H1 (cell line): ENCODE measurements at regions of chr19 and their contacts with region 1.

Region 1: GRCh38 chr19:44608391-44608821 is 5.0 kb upstream of the IGSF23 start:
- DNase-seq: no peak
- H3K4me3 ChIP-seq: no peak overlapping the region
- H3K27ac ChIP-seq: no peak overlapping the region
- H3K4me1 ChIP-seq: peaks cover 0 to 8% (median 4%) of the 10 kb centered on the region in 4 experiments; a peak in 5 of 7 replicates
- H3K27me3 ChIP-seq: no peaks in the 10 kb centered on the region
- CTCF ChIP-seq: no peak
- EP300 ChIP-seq: no peak
- POLR2A ChIP-seq: no peak
- RAD21 ChIP-seq: no peak

Region 2: DNA sequence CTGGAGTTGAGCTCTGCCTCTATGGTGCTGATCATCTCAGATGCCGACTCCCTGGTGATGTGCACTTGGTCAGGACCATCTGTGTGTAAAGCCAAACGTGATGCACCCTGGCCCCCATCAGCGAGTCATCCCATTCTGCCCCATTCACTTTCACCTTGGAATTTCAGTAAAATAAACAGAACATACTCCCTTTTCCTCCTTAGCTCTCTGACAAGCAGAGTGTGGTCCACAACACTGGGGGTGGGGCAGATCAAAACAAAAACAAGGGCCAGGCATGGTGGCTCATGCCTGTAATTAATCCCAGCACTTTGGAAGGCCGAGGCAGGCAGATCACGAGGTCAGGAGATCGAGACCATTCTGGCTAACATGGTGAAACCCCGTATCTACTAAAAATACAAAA is 91.3 kb before region 1 on chr19:
- CTCF ChIA-PET with region 1: no interaction called
- POLR2A ChIA-PET with region 1: no interaction called
- DNase-seq: no peak
- H3K4me3 ChIP-seq: no peak overlapping the region
- H3K27ac ChIP-seq: no peak overlapping the region
- H3K4me1 ChIP-seq: no peaks in the 10 kb centered on the region
- H3K27me3 ChIP-seq: no peaks in the 10 kb centered on the region
- CTCF ChIP-seq: no peak
- EP300 ChIP-seq: no peak
- POLR2A ChIP-seq: no peak
- RAD21 ChIP-seq: no peak

Region 3: DNA sequence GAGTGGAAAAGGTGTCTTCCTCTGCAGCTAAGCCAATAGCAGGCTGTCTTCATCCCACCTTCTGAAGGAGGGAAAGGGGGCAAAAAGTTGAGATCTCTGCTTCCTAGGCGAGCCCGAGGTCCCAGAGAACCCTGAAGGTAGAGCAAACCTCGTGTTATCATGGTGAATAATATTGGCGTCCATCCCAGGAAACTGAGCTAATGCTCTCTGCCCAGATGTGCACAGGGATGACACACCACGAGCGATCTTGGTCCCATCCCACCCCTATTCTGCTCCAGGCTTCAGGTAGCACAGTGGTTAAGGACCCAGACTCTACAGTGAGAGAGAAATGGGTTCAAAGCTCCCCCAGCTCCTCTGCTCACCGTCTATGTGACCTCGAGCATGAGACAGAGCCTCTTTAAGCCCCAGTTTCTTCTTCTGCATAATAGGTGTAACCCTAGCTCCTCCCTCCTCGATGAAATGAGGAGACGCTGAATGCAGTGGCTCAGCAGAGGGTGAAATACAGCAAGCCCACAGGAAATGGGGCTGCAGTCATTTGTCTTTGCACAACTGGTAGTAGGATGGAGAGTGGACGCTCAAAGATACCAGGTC is 69.1 kb before region 1 on chr19:
- CTCF ChIA-PET with region 1: no interaction called
- POLR2A ChIA-PET with region 1: no interaction called
- DNase-seq: no peak
- H3K4me3 ChIP-seq: no peak overlapping the region
- H3K27ac ChIP-seq: no peak overlapping the region
- H3K4me1 ChIP-seq: no peaks in the 10 kb centered on the region; a peak in 1 of 7 replicates
- H3K27me3 ChIP-seq: no peaks in the 10 kb centered on the region
- CTCF ChIP-seq: no peak
- EP300 ChIP-seq: no peak
- POLR2A ChIP-seq: no peak
- RAD21 ChIP-seq: no peak

Region 4: DNA sequence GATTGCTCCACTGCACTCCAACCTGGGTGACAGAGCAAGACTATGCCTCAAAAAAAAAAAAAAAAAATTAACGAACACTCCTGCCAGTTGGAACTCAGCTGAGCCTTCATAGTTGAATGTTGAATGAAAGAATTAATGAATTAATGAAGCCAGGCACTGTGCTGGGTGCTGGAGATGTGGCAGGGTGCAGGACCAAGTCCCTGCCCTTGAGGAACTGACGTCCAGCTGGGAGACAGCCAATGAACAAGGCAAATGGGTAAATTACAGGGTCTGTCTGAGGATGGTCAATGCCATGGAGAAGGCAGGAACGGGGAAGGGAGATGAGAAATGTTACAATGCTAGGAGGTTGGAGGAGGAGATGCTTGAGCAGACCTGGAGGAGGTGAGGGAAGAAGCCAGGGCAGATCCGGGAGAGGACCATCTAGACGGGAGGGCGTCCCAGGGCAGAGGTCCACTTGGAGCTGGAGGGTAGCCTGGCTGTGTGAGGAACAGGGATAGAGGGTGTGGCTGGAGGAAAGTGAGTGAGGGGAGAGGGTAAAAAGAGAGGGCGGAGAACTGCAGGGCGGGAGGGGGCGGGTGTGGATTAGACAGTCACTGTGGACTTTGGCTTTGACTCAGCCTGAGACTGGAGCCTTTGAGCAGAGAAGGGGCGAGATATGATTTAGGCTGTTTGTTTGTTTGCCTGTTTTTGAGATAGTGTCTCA is 11.8 kb before region 1 on chr19:
- CTCF ChIA-PET with region 1: interaction called, 31 read pairs
- POLR2A ChIA-PET with region 1: interaction called, 3 read pairs
- DNase-seq: no peak
- H3K4me3 ChIP-seq: no peak overlapping the region
- H3K27ac ChIP-seq: no peak overlapping the region
- H3K4me1 ChIP-seq: peaks cover 0 to 5% (median 3%) of the 10 kb centered on the region in 4 experiments; a peak in 5 of 7 replicates
- H3K27me3 ChIP-seq: no peaks in the 10 kb centered on the region
- CTCF ChIP-seq: no peak
- EP300 ChIP-seq: no peak
- POLR2A ChIP-seq: no peak
- RAD21 ChIP-seq: no peak

Region 5: GRCh38 chr19:44626048-44626624 is 17.7 kb after region 1 on chr19:
- CTCF ChIA-PET with region 1: interaction called, 29 read pairs
- POLR2A ChIA-PET with region 1: no interaction called
- DNase-seq: no peak
- H3K4me3 ChIP-seq: no peak overlapping the region
- H3K27ac ChIP-seq: no peak overlapping the region
- H3K4me1 ChIP-seq: no peaks in the 10 kb centered on the region
- H3K27me3 ChIP-seq: no peaks in the 10 kb centered on the region; a peak in 1 of 7 replicates
- CTCF ChIP-seq: no peak
- EP300 ChIP-seq: no peak
- POLR2A ChIP-seq: no peak
- RAD21 ChIP-seq: no peak

Region 6: DNA sequence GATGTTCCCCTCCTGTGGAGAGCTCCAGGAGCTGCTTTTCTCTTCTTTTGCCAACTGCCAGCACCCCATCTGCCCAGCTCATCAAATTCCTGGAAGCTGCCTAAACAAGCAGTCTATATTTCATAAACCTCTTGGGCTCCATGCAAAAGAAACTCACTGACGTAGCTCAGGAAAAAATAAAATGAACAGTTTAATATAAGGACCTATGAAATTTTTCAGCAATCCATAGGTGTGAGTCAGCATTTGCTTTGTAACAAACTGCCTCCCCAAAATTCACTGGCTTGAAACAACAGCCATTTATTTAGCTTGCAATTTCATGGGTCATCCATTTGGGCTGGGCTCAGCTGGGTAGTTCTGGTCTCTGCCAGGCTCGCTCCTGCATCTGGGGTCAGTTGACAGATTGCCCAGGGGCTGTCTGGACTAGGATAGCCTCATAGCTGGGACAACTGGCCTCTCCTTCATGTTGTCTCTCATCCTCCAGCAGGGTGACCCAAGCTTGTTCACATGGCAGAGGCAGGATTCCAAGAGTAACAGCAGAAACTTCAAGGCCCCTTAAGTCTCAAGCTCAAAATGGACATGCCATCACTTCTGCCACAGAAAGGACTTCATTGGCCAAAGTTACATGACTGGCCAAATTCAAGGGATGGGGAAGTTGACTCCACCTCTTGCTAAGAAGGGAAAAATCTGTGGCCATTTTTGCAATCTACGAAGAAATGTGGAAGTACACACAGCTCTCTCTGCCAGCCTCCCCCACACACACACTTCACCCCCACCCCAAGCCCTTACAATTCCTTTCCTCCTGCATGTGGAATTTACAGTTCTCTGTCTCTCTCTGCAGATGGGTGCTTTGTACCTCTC is 27.4 kb after region 1 on chr19:
- CTCF ChIA-PET with region 1: interaction called, 13 read pairs
- POLR2A ChIA-PET with region 1: interaction called, 3 read pairs
- DNase-seq: no peak
- H3K4me3 ChIP-seq: no peak overlapping the region
- H3K27ac ChIP-seq: no peak overlapping the region
- H3K4me1 ChIP-seq: peaks cover 0 to 2% (median 0%) of the 10 kb centered on the region in 4 experiments; a peak in 1 of 7 replicates
- H3K27me3 ChIP-seq: no peaks in the 10 kb centered on the region
- CTCF ChIP-seq: no peak
- EP300 ChIP-seq: no peak
- POLR2A ChIP-seq: no peak
- RAD21 ChIP-seq: no peak

Region 7: DNA sequence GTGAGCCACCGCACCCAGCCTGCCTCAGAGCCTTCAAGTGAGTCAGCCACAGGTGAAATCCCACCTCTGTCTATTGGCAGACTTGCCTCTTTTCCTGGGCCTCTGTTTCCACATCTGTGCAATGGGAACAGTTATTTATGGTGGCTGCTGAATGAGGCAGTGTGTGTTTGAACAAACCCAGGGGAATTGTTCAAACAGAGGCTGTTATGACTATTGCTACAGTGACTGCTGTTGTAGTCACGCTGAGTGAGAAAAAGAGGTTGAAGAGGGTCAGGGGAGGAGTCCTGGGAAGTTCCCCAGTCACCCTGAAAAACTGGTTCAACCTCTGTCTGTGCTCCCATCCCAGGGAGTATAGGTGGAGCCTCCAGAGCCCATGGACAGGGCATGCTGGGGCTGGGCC is 63.0 kb after region 1 on chr19 and contains the start of gene CEACAM19:
- CTCF ChIA-PET with region 1: no interaction called
- POLR2A ChIA-PET with region 1: no interaction called
- DNase-seq: no peak
- H3K4me3 ChIP-seq: no peak within 1 kb of the TSS
- H3K27ac ChIP-seq: no peak within 1 kb of the TSS
- H3K4me1 ChIP-seq: no peaks in the 10 kb centered on the region; a peak in 1 of 7 replicates
- H3K27me3 ChIP-seq: no peaks in the 10 kb centered on the region
- CTCF ChIP-seq: no peak
- EP300 ChIP-seq: no peak
- POLR2A ChIP-seq: no peak
- RAD21 ChIP-seq: no peak
- total RNA-seq, gene CEACAM19: 2.7 and 3.1 TPM in 2 replicates

Region 8: DNA sequence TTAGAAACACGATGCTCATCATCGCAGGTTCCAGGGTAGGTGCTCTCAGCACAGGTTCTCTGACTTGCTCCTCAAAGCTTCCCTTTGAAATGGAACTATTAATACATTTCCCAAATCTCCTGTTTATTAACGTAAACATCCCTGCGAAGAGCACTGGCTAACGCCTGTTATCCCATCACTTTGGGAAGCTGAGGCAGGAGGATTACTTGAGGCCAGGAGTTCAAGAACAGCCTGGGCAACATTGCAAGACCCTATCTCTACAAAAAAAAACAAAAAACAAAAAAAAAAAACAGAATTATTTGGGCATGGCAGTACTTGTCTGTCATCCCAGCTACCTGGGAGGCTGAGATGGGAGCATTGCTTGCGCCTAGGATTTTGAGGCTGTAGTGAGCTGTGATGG is 109.2 kb after region 1 on chr19:
- CTCF ChIA-PET with region 1: no interaction called
- POLR2A ChIA-PET with region 1: no interaction called
- DNase-seq: no peak
- H3K4me3 ChIP-seq: no peak overlapping the region
- H3K27ac ChIP-seq: no peak overlapping the region
- H3K4me1 ChIP-seq: peaks cover 0 to 12% (median 8%) of the 10 kb centered on the region in 4 experiments; a peak in 6 of 7 replicates
- H3K27me3 ChIP-seq: no peaks in the 10 kb centered on the region
- CTCF ChIP-seq: no peak
- EP300 ChIP-seq: no peak
- POLR2A ChIP-seq: no peak
- RAD21 ChIP-seq: no peak